ENCODE measurements at regions of chr12 and their contacts with region 1.

Region 1: GRCh38 chr12:12032851-12033588 is 37.7 kb upstream of the BCL2L14 start:
- DNase-seq: peak; percentile 31 to 82
- ATAC-seq: peak; percentile 75 to 91 (median 86)
- H3K4me3 ChIP-seq: peak overlapping the region; percentile 5 to 57 (median 48)
- H3K27ac ChIP-seq: peak overlapping the region in 9 of 10 donors; percentile 5 to 86 (median 77)
- H3K4me1 ChIP-seq: peaks cover 0 to 19% (median 9%) of the 10 kb centered on the region in 9 donors
- H3K27me3 ChIP-seq: peaks cover 0 to under 1% (median 0%) of the 10 kb centered on the region in 7 donors
- CTCF ChIP-seq: peak; percentile 67 to 95 (median 89)

Region 2: DNA sequence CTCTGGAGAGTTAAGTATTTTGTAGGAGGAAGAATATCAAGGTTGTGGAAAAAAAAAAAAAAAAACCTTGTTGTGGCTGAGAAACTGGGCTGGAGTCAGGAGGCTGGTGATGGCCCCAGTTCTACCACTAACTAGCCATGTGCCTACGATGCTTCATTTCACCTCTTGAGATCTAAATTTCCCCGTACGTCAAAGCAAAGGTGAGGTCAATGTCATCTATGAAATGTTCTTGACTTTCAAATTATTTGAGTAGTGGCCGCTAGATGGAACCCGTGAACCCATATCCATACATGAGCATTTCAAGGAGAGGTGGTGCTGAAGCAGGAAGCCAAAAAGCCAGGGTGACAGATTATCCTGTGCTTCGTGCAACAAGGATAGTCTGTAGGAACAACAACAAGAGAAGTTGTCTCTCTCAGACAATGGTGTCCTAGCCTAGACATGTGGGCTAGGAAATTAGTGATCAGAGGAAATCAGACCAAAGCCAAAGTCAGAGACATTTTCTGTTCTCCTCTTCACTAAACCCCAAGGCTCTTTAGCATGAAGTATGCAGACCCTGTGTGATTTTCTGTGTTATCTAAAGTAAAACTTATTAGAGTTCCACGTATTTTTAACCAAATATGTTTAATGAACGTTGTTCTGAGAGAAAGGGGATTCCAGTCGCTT is 479.0 kb before region 1 on chr12:
- intact Hi-C with region 1: loop called in 1 of 10 experiments (anchors 1 kb)
- DNase-seq: peak in 1 of 2 donors; percentile 41
- ATAC-seq: peak in 3 of 8 donors; percentile 29 to 67 (median 40)
- H3K4me3 ChIP-seq: no peak overlapping the region
- H3K27ac ChIP-seq: no peak overlapping the region
- H3K4me1 ChIP-seq: peaks cover 0 to 15% (median 3%) of the 10 kb centered on the region in 9 donors
- H3K27me3 ChIP-seq: no peaks in the 10 kb centered on the region
- CTCF ChIP-seq: peak in 8 of 9 donors; percentile 18 to 68 (median 56)

Region 3: DNA sequence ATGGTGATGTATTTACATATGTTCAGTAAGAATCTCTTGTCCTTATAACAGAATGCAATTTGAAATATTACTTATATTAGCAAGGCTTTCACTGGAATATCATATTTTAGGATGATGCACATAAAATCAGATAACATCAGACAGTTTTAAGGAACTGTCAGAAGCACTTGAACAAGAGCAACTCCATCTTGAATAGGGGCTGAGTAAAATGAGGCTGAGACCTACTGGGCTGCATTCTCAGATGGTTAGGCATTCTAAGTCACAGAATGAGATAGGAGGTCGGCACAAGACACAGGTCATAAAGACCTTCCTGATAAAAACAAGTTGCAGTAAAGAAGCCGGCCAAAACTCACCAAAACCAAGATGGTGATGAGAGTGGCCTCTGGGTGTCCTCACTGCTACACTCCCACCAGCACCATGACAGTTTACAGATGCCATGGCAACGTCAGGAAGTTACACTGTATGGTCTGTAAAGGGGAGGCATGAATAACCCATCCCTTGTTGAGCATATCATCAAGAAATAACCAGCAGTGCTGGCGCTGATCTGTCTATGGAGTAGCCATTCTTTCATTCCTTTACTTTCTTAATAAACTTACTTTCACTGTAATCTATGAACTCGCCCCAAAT is 411.1 kb before region 1 on chr12:
- intact Hi-C with region 1: loop called in 4 of 10 experiments (anchors 1 to 5 kb)
- DNase-seq: peak in 1 of 2 donors; percentile 20
- ATAC-seq: peak in 1 of 8 donors; percentile 37
- H3K4me3 ChIP-seq: no peak overlapping the region
- H3K27ac ChIP-seq: no peak overlapping the region
- H3K4me1 ChIP-seq: peaks cover 0 to 17% (median 0%) of the 10 kb centered on the region in 9 donors
- H3K27me3 ChIP-seq: no peaks in the 10 kb centered on the region
- CTCF ChIP-seq: peak in 8 of 9 donors; percentile 18 to 60 (median 42)

Region 4: GRCh38 chr12:11730299-11731041 is 302.6 kb before region 1 on chr12:
- intact Hi-C with region 1: no loop called
- DNase-seq: no peak
- ATAC-seq: no peak
- H3K4me3 ChIP-seq: no peak overlapping the region
- H3K27ac ChIP-seq: peak overlapping the region in 1 of 10 donors; percentile 65
- H3K4me1 ChIP-seq: peaks cover 0 to 65% (median 21%) of the 10 kb centered on the region in 9 donors
- H3K27me3 ChIP-seq: no peaks in the 10 kb centered on the region
- CTCF ChIP-seq: no peak